ENCODE measurements at regions of chr3 and their contacts with region 1.

Region 1: DNA sequence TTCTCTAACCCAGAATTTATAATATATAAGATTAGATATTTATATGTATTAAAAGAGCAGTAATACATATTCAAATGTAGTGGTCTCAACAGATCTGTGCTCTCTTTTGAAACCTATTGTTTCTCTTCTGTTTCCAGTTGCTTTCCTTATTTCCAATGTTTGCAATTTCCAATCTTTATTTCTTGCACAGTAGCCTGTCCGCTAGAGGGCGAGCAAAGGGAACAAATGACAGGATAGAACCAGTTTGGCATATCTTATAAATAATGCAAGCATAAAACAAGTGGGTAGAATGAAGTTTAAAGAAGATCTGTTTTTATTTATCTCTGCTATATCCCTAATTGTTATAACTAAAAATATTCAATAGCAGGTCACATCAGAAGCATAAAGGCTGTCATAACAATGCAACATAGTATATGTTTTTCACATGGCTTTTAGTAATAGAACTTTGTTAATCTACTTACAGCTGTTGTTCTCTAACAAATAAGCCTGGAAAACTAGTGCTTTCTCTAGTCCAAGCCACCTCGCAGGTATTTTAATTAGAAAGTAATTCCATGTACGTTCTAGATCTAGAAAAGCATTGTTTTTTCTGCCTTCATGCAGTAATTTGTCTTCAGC is 15.1 kb upstream of the TCAIM start:
- DNase-seq: peak; percentile 80
- ATAC-seq: peak; percentile 56
- H3K4me3 ChIP-seq: no peak overlapping the region
- H3K27ac ChIP-seq: no peak overlapping the region
- H3K4me1 ChIP-seq: peaks cover 15% of the 10 kb centered on the region
- H3K27me3 ChIP-seq: no peaks in the 10 kb centered on the region
- CTCF ChIP-seq: peak; percentile 91

Region 2: DNA sequence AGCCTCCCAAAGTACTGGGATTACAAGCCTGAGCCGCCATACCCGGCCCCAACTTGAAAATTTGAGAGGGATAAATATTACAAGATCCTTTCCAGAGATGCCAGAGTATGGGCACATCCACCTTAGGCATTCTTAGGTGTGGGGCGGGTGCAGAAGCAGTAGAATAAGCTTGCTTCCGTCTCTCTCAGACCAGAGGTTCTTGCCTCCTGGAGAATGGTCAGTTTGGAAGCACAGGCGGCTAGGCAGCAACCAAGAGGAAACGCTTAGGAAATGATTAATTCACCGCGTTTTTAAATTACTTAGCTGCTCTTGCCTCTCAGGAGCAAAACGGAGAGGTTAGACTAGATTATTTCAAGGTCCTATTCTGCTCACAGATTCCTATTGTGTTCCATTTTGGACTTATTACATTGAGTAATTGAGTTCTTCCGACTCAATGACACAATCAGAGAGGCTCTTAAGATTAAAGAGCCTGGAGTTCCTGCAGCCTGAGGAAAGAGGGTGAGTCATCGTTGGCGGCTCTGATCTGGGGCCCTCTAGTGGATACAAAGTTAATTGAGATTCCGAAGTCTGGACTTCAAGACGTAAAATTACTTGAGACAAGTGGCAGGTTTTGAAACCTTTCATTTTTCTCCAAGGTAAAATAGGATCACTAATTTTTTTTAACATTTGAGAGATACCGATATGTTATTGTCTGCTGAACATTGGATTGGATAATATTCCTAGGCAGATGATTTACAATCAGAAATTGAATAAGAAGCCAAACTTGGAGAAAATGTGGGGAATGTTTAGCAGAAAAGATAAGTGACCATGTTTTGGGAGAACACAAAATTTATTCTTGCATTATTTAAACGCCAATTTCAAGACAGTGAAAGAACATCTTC is 87.6 kb before region 1 on chr3:
- CTCF ChIA-PET with region 1: no interaction called
- POLR2A ChIA-PET with region 1: no interaction called
- intact Hi-C with region 1: loop called (anchors 5 kb)
- DNase-seq: peak; percentile 93
- ATAC-seq: peak; percentile 78
- H3K4me3 ChIP-seq: no peak overlapping the region
- H3K27ac ChIP-seq: no peak overlapping the region
- H3K4me1 ChIP-seq: 0 out of 2 replicates have a peak, but pooled peaks cover 4% of the 10 kb centered on the region
- H3K27me3 ChIP-seq: no peaks in the 10 kb centered on the region
- CTCF ChIP-seq: peak; percentile 91

Region 3: GRCh38 chr3:44477312-44478030 is 154.0 kb after region 1 on chr3 and contains the start of gene ZNF445:
- CTCF ChIA-PET with region 1: no interaction called
- POLR2A ChIA-PET with region 1: no interaction called
- intact Hi-C with region 1: loop called (anchors 5 kb)
- DNase-seq: peak; percentile 83
- ATAC-seq: peak; percentile 90
- H3K4me3 ChIP-seq: peak within 1 kb of the TSS; percentile 83
- H3K27ac ChIP-seq: no peak within 1 kb of the TSS
- H3K4me1 ChIP-seq: peaks cover 5% of the 10 kb centered on the region; the same call in 1 of the 2 replicates
- H3K27me3 ChIP-seq: no peaks in the 10 kb centered on the region
- CTCF ChIP-seq: no peak
- total RNA-seq, gene ZNF445: 7.7 and 8.2 TPM in 2 replicates

Region 4: DNA sequence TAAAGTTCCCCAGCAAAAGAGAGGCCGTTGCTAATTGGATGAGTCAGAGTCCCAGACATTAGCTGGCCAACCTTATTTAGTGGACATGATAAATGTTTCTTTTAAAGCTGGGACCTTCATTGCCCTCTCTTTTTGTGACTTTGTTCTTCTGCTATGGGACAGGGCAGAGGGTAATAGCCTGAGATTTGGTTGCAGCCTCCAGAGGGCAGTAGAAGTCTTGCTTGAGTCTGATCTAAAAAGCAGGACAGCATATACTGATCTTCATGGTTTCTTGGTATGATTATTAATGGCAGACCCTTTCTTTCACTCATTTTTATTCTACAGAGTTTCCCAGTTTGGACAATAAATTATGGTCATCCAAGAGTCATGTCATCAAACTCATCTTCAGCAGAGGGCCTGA is 206.5 kb after region 1 on chr3:
- CTCF ChIA-PET with region 1: no interaction called
- POLR2A ChIA-PET with region 1: no interaction called
- intact Hi-C with region 1: loop called (anchors 5 kb)
- DNase-seq: peak; percentile 41
- ATAC-seq: no peak
- H3K4me3 ChIP-seq: no peak overlapping the region
- H3K27ac ChIP-seq: no peak overlapping the region
- H3K4me1 ChIP-seq: no peaks in the 10 kb centered on the region
- H3K27me3 ChIP-seq: peaks cover 6% of the 10 kb centered on the region; the same call in 1 of the 2 replicates
- CTCF ChIP-seq: peak; percentile 65

Region 5: GRCh38 chr3:44761424-44762169 is 438.1 kb after region 1 on chr3 and contains the starts of genes KIAA1143 and KIF15:
- CTCF ChIA-PET with region 1: no interaction called
- POLR2A ChIA-PET with region 1: no interaction called
- intact Hi-C with region 1: loop called (anchors 5 kb)
- DNase-seq: peak; percentile 98
- ATAC-seq: peak; percentile 90
- H3K4me3 ChIP-seq: peak within 1 kb of the TSS; percentile 76
- H3K27ac ChIP-seq: peak within 1 kb of the TSS; percentile 55
- H3K4me1 ChIP-seq: peaks cover 7% of the 10 kb centered on the region
- H3K27me3 ChIP-seq: no peaks in the 10 kb centered on the region
- CTCF ChIP-seq: peak; percentile 30; the same call in 1 of the 2 replicates
- total RNA-seq, gene KIAA1143: 16.5 and 20.4 TPM in 2 replicates
- total RNA-seq, gene KIF15: 19.1 and 31.8 TPM in 2 replicates